ENCODE measurements at regions of chr11 and their contacts with region 1.

Region 1: DNA sequence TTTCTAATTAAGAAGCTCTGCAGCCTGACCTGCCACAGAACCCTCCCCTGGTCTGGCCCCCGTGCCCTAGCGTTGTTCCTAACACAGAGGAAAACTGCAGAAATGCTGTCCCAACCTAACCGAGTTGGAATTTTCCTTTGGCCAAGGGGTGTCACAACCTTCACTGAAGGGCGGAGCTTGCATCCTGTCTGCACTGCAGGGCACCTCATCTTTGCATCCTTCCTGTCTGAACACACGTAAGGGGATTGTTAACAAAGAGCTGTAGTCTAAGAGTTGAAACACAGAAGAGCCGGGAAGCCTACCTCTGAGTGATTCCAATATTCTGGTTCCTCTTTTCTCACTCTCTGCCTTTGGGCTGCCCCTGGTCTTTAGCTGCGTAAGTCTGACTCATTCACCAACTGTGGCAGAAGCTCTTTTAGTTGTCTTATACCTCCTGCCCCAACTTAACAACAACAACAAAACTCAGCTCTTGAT is 1.6 kb downstream of the DIXDC1 start:
- DNase-seq: no peak
- ATAC-seq: 0 out of 2 replicates have a peak, but pooled peaks have one; percentile 7
- H3K4me3 ChIP-seq: peak overlapping the region in 1 of 2 experiments; percentile 6; a peak in 3 of 4 replicates
- H3K27ac ChIP-seq: peak overlapping the region; percentile 30
- H3K4me1 ChIP-seq: peaks cover 22% of the 10 kb centered on the region
- H3K27me3 ChIP-seq: no peaks in the 10 kb centered on the region
- CTCF ChIP-seq: no peak

Region 2: GRCh38 chr11:110287537-110287936 is 1651.2 kb before region 1 on chr11:
- CTCF ChIA-PET with region 1: no interaction called
- POLR2A ChIA-PET with region 1: interaction called, 19 read pairs
- in situ Hi-C with region 1: no loop called
- intact Hi-C with region 1: no loop called
- DNase-seq: no peak
- ATAC-seq: no peak
- H3K4me3 ChIP-seq: no peak overlapping the region
- H3K27ac ChIP-seq: no peak overlapping the region
- H3K4me1 ChIP-seq: peaks cover 27% of the 10 kb centered on the region; the same call in 1 of the 2 replicates
- H3K27me3 ChIP-seq: no peaks in the 10 kb centered on the region
- CTCF ChIP-seq: no peak

Region 3: DNA sequence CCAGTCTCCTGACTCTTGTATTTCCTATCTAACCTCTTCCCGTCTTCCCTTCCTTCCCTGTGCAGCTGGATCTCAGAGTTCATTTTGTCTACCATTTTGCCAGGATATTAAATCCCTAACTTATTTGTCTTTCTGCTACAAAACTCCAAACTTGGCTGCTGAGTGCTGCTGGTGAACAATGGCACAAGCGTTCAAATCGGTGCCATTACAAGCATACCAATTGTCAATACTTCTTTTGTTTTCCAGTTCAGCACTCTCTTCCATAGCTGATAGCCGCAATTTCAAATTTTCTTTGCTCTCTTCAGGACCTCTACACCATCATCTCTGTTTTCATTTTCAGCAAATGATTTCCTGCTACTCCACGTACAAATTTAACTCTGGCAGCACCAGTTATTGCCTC is 211.8 kb after region 1 on chr11:
- CTCF ChIA-PET with region 1: no interaction called
- POLR2A ChIA-PET with region 1: interaction called, 20 read pairs
- in situ Hi-C with region 1: no loop called
- intact Hi-C with region 1: no loop called
- DNase-seq: no peak
- ATAC-seq: no peak
- H3K4me3 ChIP-seq: no peak overlapping the region
- H3K27ac ChIP-seq: no peak overlapping the region
- H3K4me1 ChIP-seq: no peaks in the 10 kb centered on the region
- H3K27me3 ChIP-seq: no peaks in the 10 kb centered on the region
- CTCF ChIP-seq: no peak